Activated CD8-positive, alpha-beta T cell treated with anti-CD3 and anti-CD28 coated beads for 36 hours (primary cell): ENCODE measurements at regions of chr5 and their contacts with region 1.

Region 1: DNA sequence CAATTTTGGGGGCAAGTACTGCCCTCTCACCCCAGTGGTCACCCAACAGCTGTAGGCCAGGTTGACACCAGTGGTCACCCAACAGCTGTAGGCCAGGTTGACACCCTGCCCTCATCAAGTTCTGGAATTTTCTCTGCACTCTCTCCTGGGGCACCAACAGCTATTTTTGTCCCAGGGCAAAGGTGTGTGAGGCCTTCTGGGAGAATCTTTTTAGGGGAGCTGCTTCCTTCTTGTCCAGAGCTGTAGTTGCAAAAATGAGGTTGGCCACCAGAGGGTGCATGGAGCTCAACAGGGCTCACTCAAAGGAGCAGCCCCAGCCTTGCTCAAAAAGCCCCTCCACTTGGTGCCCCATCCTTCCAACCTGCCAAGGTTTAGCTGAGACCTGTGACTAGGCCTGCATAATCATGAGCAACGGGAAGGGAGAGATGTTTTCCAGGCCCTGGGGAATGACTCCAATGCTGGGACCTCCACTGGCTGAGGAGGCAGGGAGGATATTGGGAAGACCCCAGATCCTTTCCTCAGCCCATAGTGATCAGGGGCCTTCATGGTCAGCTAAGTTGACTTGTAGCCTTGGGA is 10.6 kb upstream of the P4HA2 start:
- DNase-seq: peak; percentile 94
- ATAC-seq: peak; percentile 98
- H3K4me3 Mint-ChIP-seq: no peak overlapping the region
- H3K27ac Mint-ChIP-seq: no peak overlapping the region
- H3K4me1 Mint-ChIP-seq: no peaks in the 10 kb centered on the region
- H3K27me3 Mint-ChIP-seq: no peaks in the 10 kb centered on the region
- CTCF ChIP-seq: peak; percentile 79

Region 2: DNA sequence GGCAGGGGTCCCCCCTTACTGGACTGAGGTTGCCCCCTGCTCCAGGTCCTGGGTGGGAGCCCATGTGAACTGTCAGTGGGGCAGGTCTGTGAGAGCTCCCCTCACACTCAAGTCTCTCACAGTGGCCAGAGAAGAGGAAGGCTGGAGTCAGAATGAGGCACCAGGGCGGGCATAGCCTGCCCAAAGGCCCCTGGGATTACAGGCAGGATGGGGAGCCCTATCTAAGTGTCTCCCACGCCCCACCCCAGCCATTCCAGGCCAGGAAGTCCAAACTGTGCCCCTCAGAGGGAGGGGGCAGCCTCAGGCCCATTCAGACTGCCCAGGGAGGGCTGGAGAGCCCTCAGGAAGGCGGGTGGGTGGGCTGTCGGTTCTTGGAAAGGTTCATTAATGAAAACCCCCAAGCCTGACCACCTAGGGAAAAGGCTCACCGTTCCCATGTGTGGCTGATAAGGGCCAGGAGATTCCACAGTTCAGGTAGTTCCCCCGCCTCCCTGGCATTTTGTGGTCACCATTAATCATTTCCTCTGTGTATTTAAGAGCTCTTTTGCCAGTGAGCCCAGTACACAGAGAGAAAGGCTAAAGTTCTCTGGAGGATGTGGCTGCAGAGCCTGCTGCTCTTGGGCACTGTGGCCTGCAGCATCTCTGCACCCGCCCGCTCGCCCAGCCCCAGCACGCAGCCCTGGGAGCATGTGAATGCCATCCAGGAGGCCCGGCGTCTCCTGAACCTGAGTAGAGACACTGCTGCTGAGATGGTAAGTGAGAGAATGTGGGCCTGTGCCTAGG is 164.8 kb before region 1 on chr5 and contains the start of gene CSF2:
- CTCF ChIA-PET with region 1: interaction called, 10 read pairs
- POLR2A ChIA-PET with region 1: no interaction called
- intact Hi-C with region 1: loop called (anchors 10 kb)
- DNase-seq: peak; percentile 65
- ATAC-seq: peak; percentile 37
- H3K4me3 Mint-ChIP-seq: peak within 1 kb of the TSS; percentile 74
- H3K27ac Mint-ChIP-seq: peak within 1 kb of the TSS; percentile 80
- H3K4me1 Mint-ChIP-seq: peaks cover 68% of the 10 kb centered on the region
- H3K27me3 Mint-ChIP-seq: no peaks in the 10 kb centered on the region
- CTCF ChIP-seq: no peak
- total RNA-seq, gene CSF2: 61.5 to 64.1 TPM

Region 3: DNA sequence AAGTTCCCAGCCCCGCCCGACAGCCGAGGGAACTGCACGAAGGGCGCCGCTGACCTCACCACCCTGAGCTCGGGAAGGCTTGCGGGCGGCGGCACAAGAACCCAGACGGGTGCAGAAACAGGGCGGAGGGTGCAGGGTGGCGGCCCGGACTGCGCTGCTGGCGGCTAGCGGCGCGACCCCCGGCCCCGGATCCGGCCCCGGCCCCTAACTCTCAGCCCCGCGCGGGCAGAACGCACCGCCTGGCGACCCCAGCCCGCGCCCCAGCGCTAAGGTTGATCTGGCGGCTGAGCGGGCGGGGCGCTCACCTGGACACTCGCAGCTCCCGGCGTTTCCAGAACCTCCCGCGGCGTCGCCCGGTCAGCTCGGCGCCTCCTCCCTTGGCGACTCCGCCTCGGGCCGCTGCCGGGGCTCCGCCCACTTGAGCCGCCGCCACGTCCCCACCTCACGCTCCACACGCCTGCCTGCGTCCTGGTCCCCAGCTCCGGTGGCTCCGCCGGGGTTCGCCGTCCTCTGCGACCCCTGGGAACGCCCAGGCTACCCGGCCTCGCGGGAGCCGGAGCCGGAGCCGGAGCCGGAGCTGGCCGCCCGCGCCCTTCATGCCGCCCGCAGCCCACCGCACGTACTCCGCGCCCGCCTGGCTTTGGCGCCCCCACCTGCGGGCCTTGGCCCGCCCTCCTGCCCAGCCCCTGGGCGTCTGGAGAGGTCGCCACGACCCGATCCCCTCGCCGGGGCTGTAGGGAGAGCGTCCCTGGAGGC is 10.6 kb before region 1 on chr5 and contains the start of gene P4HA2:
- CTCF ChIA-PET with region 1: interaction called, 65 read pairs
- POLR2A ChIA-PET with region 1: no interaction called
- intact Hi-C with region 1: no loop called
- DNase-seq: peak; percentile 66
- ATAC-seq: peak; percentile 86
- H3K4me3 Mint-ChIP-seq: peak within 1 kb of the TSS; percentile 60
- H3K27ac Mint-ChIP-seq: no peak within 1 kb of the TSS
- H3K4me1 Mint-ChIP-seq: peaks cover 10% of the 10 kb centered on the region
- H3K27me3 Mint-ChIP-seq: peaks cover 27% of the 10 kb centered on the region
- CTCF ChIP-seq: no peak
- total RNA-seq, gene P4HA2: 17.3 to 18.6 TPM

Region 4: DNA sequence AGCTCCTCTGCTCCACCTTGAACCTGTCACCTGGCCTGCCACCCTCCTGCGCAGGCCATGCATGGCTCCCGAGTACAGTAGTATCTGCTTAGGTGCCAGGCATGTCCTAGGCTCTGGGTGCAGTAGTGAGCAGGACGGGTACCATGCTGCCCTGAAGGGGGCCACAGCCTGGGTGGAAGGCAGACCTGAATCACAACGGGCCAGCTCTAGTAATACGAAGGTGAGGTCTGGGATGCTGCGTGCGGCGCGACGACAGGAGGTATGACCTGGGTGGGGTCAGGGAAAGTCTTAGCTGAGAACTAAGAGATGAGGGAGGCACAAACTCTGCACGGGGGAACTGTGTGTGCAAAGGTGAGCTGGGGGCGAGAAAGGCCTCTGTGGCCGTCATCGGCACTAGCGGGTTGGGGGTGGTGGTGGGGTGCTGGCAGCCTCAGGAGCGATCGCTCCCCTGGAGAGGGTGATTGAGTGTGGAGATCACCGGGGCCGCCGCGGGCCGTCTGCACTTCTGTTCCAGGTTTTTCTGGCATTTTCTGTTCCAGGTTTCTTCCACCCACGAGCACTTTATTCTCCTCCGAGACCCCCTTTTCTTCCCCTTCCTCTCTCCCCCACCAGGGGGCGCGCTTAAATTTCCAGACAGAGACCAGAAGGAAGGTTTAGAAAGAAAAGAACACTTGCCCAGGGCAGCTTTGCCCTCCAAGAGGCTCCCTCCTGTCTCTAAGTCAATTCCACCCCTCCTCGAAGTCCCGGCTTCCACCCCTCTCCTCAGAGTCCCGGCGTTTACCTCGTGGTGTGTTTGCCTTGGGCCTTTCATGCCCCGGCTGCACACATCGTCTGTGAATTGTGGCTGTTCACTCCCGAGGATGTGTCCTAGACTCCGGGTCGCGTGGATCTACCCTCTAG is 34.3 kb after region 1 on chr5:
- CTCF ChIA-PET with region 1: interaction called, 22 read pairs
- POLR2A ChIA-PET with region 1: no interaction called
- intact Hi-C with region 1: no loop called
- DNase-seq: peak; percentile 82
- ATAC-seq: peak; percentile 53
- H3K4me3 Mint-ChIP-seq: no peak overlapping the region
- H3K27ac Mint-ChIP-seq: no peak overlapping the region
- H3K4me1 Mint-ChIP-seq: peaks cover 17% of the 10 kb centered on the region
- H3K27me3 Mint-ChIP-seq: peaks cover 9% of the 10 kb centered on the region
- CTCF ChIP-seq: peak; percentile 92

Region 5: DNA sequence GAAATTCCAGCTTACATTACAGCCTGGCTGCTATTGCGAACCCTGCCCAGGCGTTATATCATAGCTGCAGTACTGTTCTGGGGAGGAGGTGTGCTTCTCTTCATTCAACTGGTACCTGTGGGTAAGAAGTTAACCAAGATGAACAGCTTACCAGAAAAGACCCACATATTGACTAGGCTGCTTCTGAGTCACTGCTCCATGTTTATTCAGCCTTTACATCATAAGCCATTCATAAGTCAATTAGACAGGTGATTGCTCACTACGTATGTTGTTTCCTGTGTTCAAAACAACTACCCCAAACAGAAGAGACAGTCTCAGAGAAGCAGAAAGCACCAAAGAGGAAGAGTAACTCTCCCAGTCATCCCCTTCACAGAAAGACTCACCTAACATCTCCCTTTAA is 96.6 kb after region 1 on chr5:
- CTCF ChIA-PET with region 1: interaction called, 10 read pairs
- POLR2A ChIA-PET with region 1: no interaction called
- intact Hi-C with region 1: no loop called
- DNase-seq: no peak
- ATAC-seq: peak; percentile 66
- H3K4me3 Mint-ChIP-seq: no peak overlapping the region
- H3K27ac Mint-ChIP-seq: no peak overlapping the region
- H3K4me1 Mint-ChIP-seq: no peaks in the 10 kb centered on the region
- H3K27me3 Mint-ChIP-seq: no peaks in the 10 kb centered on the region
- CTCF ChIP-seq: no peak

Region 6: GRCh38 chr5:132500931-132501630 is 262.8 kb after region 1 on chr5:
- CTCF ChIA-PET with region 1: interaction called, 19 read pairs
- POLR2A ChIA-PET with region 1: no interaction called
- intact Hi-C with region 1: no loop called
- DNase-seq: peak; percentile 83
- ATAC-seq: peak; percentile 40
- H3K4me3 Mint-ChIP-seq: no peak overlapping the region
- H3K27ac Mint-ChIP-seq: peak overlapping the region; percentile 71
- H3K4me1 Mint-ChIP-seq: peaks cover 36% of the 10 kb centered on the region
- H3K27me3 Mint-ChIP-seq: peaks cover under 1% of the 10 kb centered on the region
- CTCF ChIP-seq: peak; percentile 89